ENCODE measurements at regions of chr4 and their contacts with region 1.

Region 1: DNA sequence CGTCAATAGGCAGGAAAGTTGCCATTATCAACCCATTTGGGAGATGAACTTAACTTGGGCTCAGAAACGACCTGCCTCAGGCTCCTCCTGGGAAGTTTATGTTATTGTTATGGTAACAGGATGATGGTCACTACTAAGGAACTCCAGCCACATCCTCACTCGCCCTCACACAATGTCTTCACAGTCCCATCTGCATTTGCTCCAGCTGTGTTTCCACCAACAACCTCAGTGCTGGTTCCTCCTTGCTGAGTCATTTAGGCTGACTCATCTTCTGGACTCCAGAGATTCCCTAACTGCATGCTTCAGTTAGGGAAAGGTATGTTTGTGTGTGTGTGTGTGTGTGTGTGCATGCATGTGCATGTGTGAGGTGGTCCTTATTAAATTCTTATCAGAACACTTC is 293.4 kb upstream of the BOD1L1 start:
- DNase-seq: peak; percentile 97
- H3K4me3 Mint-ChIP-seq: peak overlapping the region; percentile 24
- H3K27ac Mint-ChIP-seq: peak overlapping the region; percentile 96
- H3K4me1 Mint-ChIP-seq: peaks cover 41% of the 10 kb centered on the region
- H3K27me3 Mint-ChIP-seq: no peaks in the 10 kb centered on the region
- CTCF ChIP-seq: no peak

Region 2: DNA sequence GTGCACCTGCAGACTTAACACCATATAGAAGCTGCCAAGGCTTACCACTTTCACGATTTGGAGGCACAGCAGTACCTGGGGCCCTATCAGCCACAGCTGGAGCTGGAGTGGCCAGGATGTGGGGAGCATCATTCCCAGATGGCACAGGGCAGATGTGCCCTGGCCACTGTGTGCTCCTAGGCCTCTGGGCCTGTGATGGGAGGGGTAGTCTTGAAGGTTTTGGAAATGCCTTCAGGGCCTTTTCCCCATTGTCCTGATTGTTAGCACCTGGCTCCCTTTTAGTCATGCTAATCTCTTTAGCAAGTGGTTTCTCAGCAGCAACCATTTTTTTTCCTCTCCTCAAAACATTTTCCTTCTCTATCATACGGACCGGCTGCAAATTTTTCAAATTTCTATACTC is 927.0 kb before region 1 on chr4:
- CTCF ChIA-PET with region 1: no interaction called
- POLR2A ChIA-PET with region 1: no interaction called
- intact Hi-C with region 1: no loop called
- DNase-seq: no peak
- H3K4me3 Mint-ChIP-seq: no peak overlapping the region
- H3K27ac Mint-ChIP-seq: no peak overlapping the region
- H3K4me1 Mint-ChIP-seq: no peaks in the 10 kb centered on the region
- H3K27me3 Mint-ChIP-seq: no peaks in the 10 kb centered on the region
- CTCF ChIP-seq: no peak

Region 3: DNA sequence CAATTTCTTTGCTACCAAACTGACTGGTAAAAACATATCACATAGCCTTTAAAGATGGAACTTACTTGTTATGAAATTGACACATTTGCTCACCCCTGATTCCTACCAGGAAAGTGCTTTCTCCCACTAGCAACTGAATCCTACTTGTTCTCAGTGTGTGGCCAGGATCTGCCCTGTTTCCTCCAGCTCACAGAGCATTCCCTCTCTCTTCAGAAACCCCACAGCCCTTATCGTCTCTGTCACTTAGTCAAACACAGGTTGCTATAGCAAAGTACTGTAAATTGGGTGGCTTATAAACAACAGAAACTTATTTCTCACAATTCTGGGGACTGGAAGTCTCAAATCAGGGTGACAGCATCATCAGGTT is 28.2 kb before region 1 on chr4:
- CTCF ChIA-PET with region 1: no interaction called
- POLR2A ChIA-PET with region 1: interaction called, 3 read pairs
- intact Hi-C with region 1: loop called (anchors 1 kb)
- DNase-seq: no peak
- H3K4me3 Mint-ChIP-seq: peak overlapping the region; percentile 25
- H3K27ac Mint-ChIP-seq: peak overlapping the region; percentile 96
- H3K4me1 Mint-ChIP-seq: peaks cover 46% of the 10 kb centered on the region
- H3K27me3 Mint-ChIP-seq: no peaks in the 10 kb centered on the region
- CTCF ChIP-seq: no peak

Region 4: GRCh38 chr4:13907255-13907751 is 13.6 kb before region 1 on chr4:
- CTCF ChIA-PET with region 1: interaction called, 5 read pairs
- POLR2A ChIA-PET with region 1: interaction called, 20 read pairs
- intact Hi-C with region 1: no loop called
- DNase-seq: peak; percentile 95
- H3K4me3 Mint-ChIP-seq: peak overlapping the region; percentile 9
- H3K27ac Mint-ChIP-seq: peak overlapping the region; percentile 96
- H3K4me1 Mint-ChIP-seq: peaks cover 40% of the 10 kb centered on the region
- H3K27me3 Mint-ChIP-seq: no peaks in the 10 kb centered on the region
- CTCF ChIP-seq: peak; percentile 35

Region 5: GRCh38 chr4:14035076-14035475 is 114.2 kb after region 1 on chr4:
- CTCF ChIA-PET with region 1: no interaction called
- POLR2A ChIA-PET with region 1: no interaction called
- intact Hi-C with region 1: no loop called
- DNase-seq: no peak
- H3K4me3 Mint-ChIP-seq: no peak overlapping the region
- H3K27ac Mint-ChIP-seq: no peak overlapping the region
- H3K4me1 Mint-ChIP-seq: no peaks in the 10 kb centered on the region
- H3K27me3 Mint-ChIP-seq: no peaks in the 10 kb centered on the region
- CTCF ChIP-seq: no peak

Region 6: GRCh38 chr4:14168919-14169318 is 248.0 kb after region 1 on chr4:
- CTCF ChIA-PET with region 1: no interaction called
- POLR2A ChIA-PET with region 1: no interaction called
- intact Hi-C with region 1: loop called (anchors 10 kb)
- DNase-seq: peak; percentile 96
- H3K4me3 Mint-ChIP-seq: no peak overlapping the region
- H3K27ac Mint-ChIP-seq: no peak overlapping the region
- H3K4me1 Mint-ChIP-seq: peaks cover 20% of the 10 kb centered on the region
- H3K27me3 Mint-ChIP-seq: no peaks in the 10 kb centered on the region
- CTCF ChIP-seq: no peak